CD14-positive monocyte (primary cell): ENCODE measurements at regions of chr12 and their contacts with region 1.

Region 1: GRCh38 chr12:116559162-116559935 is at the start of gene MAP1LC3B2:
- DNase-seq: peak; percentile 97 to 98 (median 97)
- H3K4me3 ChIP-seq: peak within 1 kb of the TSS in 2 of 3 experiments; percentile 17 to 25
- H3K4me3 Mint-ChIP-seq: peak within 1 kb of the TSS; percentile 74 to 82
- H3K27ac ChIP-seq: peak within 1 kb of the TSS; percentile 98 to 100
- H3K27ac Mint-ChIP-seq: peak within 1 kb of the TSS; percentile 100
- H3K4me1 ChIP-seq: peaks cover 49% of the 10 kb centered on the region in 2 donors
- H3K4me1 Mint-ChIP-seq: peaks cover 57% of the 10 kb centered on the region
- H3K27me3 ChIP-seq: no peaks in the 10 kb centered on the region
- H3K27me3 Mint-ChIP-seq: peaks cover 0 to 2% (median 0%) of the 10 kb centered on the region in 3 donors
- CTCF ChIP-seq: no peak
- polyA plus RNA-seq, gene MAP1LC3B2: 2.6 to 12.9 (median 6.4) TPM

Region 2: DNA sequence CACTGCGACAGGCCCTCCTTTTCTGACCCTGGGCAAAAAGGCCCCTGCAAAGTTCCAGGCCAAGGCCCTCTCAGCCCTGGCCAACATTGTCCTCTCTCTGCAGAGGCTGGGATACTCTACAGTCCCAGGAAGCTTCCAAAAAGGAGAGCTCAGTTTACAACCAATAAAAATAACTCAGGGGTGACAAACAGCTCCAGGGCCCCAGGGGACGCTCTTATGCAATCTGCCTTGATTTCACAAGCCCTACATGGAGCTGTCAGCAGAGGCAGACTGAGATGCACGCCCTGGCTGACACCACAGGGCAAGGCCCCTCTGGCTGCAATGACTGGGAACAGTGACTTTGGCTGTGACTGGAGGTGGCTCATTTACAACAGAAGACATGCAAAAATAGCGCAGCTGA is 152.8 kb before region 1 on chr12:
- intact Hi-C with region 1: loop called in 1 of 2 experiments (anchors 10 kb)
- DNase-seq: peak; percentile 92 to 96 (median 95)
- H3K4me3 ChIP-seq: no peak overlapping the region
- H3K4me3 Mint-ChIP-seq: peak overlapping the region in 1 of 2 donors; percentile 21
- H3K27ac ChIP-seq: peak overlapping the region; percentile 77 to 82
- H3K27ac Mint-ChIP-seq: peak overlapping the region; percentile 88 to 96 (median 90)
- H3K4me1 ChIP-seq: peaks cover 67 to 74% of the 10 kb centered on the region in 2 donors
- H3K4me1 Mint-ChIP-seq: peaks cover 67% of the 10 kb centered on the region
- H3K27me3 ChIP-seq: no peaks in the 10 kb centered on the region
- H3K27me3 Mint-ChIP-seq: peaks cover 0 to 5% (median 3%) of the 10 kb centered on the region in 3 donors
- CTCF ChIP-seq: no peak

Region 3: GRCh38 chr12:116591855-116592637 is 32.7 kb after region 1 on chr12:
- intact Hi-C with region 1: loop called (anchors 2 kb)
- DNase-seq: no peak
- H3K4me3 ChIP-seq: no peak overlapping the region
- H3K4me3 Mint-ChIP-seq: no peak overlapping the region
- H3K27ac ChIP-seq: peak overlapping the region; percentile 89 to 99
- H3K27ac Mint-ChIP-seq: peak overlapping the region; percentile 89 to 100 (median 99)
- H3K4me1 ChIP-seq: peaks cover 45 to 50% of the 10 kb centered on the region in 2 donors
- H3K4me1 Mint-ChIP-seq: peaks cover 44% of the 10 kb centered on the region
- H3K27me3 ChIP-seq: no peaks in the 10 kb centered on the region
- H3K27me3 Mint-ChIP-seq: peaks cover 0 to 1% (median 0%) of the 10 kb centered on the region in 3 donors
- CTCF ChIP-seq: no peak